ENCODE measurements at regions of chr2 and their contacts with region 1.

Region 1: DNA sequence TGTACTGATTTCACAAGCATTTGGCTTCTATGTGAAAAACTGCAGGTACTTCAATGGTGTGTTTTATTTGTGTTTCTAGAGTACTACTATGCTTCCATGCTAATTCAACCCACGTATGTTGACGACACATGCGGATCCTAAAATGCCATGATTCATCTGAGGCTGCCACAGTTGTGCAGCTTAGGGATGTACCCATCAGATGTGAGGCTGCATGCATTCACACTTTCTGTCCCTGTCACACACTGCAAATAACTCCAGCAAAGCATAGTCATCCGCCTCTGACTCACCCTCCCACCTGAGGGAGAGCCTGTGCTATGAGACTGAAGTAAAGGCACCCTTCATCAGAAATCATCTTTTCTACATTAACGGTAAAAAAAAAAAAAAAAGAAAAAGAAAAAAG is 22.1 kb upstream of the SERTAD2 start:
- DNase-seq: peak; percentile 49
- ATAC-seq: peak; percentile 81
- H3K4me3 Mint-ChIP-seq: no peak overlapping the region
- H3K27ac Mint-ChIP-seq: no peak overlapping the region
- H3K4me1 Mint-ChIP-seq: peaks cover 47% of the 10 kb centered on the region
- H3K27me3 Mint-ChIP-seq: no peaks in the 10 kb centered on the region

Region 2: DNA sequence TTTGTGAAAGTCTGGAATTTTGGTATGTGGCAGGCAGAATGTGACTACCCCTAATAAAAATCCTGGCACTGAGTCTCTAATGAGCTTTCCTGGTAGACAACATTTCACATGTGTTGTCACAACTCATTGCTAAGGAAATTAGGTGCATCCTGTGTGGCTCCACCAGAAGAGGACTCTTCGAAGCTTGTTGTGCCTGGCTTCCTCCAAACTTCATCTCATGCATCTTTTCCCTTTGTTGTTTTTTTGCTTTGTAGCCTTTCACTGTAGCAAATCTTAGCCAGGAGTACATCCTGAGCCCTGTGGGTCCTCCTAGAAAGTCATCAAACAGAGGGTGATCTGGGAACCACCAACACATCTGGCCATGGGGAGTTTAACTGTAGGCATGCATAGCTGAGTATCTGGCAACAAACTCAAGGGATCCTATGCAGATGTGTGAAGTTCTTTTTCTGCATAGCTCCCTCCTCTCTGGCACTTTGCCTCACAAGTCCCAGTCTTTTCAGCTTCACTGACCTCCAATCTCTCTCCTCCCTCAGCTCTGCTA is 19.9 kb after region 1 on chr2:
- CTCF ChIA-PET with region 1: interaction called, 10 read pairs
- POLR2A ChIA-PET with region 1: no interaction called
- DNase-seq: no peak
- ATAC-seq: no peak
- H3K4me3 Mint-ChIP-seq: no peak overlapping the region
- H3K27ac Mint-ChIP-seq: peak overlapping the region; percentile 64
- H3K4me1 Mint-ChIP-seq: peaks cover 54% of the 10 kb centered on the region
- H3K27me3 Mint-ChIP-seq: no peaks in the 10 kb centered on the region